B cell (primary cell): ENCODE measurements at regions of chr5 and their contacts with region 1.

Region 1: DNA sequence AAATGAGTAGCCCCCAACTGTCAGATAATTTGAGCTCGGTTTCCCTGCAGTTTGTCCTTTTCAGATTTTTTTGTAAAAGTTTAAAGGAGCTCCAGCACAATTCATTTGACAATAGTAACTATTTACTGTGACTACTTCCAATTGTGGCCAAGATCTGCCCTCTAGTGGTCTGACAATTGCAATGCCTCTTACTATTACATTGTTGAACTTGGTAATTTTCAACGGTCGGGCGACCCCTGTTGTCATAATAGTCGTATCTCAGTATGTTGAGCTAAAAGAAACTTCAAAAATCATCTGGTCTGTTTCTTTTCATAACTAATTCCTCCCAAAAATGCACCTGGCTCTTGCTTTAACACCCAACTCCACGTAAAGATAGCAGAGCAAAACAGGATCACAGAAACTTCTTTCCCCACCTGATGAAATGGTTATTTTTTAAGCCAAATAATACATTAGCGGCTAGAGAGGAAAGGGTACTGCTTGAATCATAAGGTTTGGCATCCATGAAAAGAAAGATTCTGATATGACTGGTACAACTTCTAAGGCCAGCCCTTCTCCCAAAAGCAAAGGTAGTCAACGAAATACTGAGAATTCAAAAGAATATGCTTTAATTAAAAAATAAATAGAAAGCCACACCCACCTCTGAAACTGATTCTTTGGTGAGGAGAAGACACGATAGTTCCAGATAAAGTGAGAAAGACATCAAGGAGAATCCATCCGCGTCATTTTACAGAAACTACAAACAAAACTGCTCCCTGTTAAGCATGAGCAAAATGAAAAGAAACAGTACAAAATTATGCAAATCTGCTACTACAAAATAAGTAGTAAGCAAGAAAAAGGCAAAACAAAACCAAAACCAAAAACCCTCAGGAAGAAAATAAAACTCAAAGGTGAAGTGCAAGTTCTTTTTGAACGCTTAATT is 76.9 kb upstream of the HTR4 start:
- DNase-seq: peak; percentile 80
- ATAC-seq: peak; percentile 92
- H3K4me3 ChIP-seq: peak overlapping the region in 4 of 5 experiments; percentile 0 to 39 (median 24)
- H3K4me3 Mint-ChIP-seq: peak overlapping the region; percentile 76
- H3K27ac ChIP-seq: no peak overlapping the region
- H3K27ac Mint-ChIP-seq: no peak overlapping the region
- H3K4me1 ChIP-seq: no peaks in the 10 kb centered on the region
- H3K4me1 Mint-ChIP-seq: peaks cover 11% of the 10 kb centered on the region
- H3K27me3 ChIP-seq: no peaks in the 10 kb centered on the region
- H3K27me3 Mint-ChIP-seq: peaks cover 10% of the 10 kb centered on the region
- CTCF ChIP-seq: peak; percentile 98

Region 2: GRCh38 chr5:147949711-147950573 is 781.3 kb before region 1 on chr5:
- CTCF ChIA-PET with region 1: no interaction called
- POLR2A ChIA-PET with region 1: no interaction called
- intact Hi-C with region 1: loop called (anchors 5 kb)
- DNase-seq: peak; percentile 8
- ATAC-seq: no peak
- H3K4me3 ChIP-seq: no peak overlapping the region
- H3K4me3 Mint-ChIP-seq: no peak overlapping the region
- H3K27ac ChIP-seq: no peak overlapping the region
- H3K27ac Mint-ChIP-seq: no peak overlapping the region
- H3K4me1 ChIP-seq: no peaks in the 10 kb centered on the region
- H3K4me1 Mint-ChIP-seq: no peaks in the 10 kb centered on the region
- H3K27me3 ChIP-seq: no peaks in the 10 kb centered on the region
- H3K27me3 Mint-ChIP-seq: peaks cover 2% of the 10 kb centered on the region
- CTCF ChIP-seq: peak; percentile 65

Region 3: DNA sequence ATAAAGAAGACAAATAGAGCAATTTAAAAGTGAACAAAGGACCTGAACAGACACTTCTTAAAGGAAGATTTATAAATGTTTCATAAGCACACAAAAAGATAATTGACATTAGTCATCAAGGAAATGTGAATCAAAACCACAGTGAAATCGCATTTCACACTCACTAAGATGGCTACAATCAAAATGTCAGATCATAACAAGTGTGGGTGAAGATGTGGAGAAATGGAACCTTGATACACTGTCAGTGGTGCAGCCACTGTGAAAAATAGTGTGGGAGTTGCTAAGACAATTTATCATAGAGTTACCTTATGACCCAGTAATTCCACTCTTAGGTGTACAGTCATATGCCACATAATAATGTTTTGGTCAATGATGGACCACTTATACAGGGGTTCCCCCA is 22.3 kb before region 1 on chr5:
- CTCF ChIA-PET with region 1: interaction called, 11 read pairs
- POLR2A ChIA-PET with region 1: no interaction called
- intact Hi-C with region 1: no loop called
- DNase-seq: no peak
- ATAC-seq: no peak
- H3K4me3 ChIP-seq: no peak overlapping the region
- H3K4me3 Mint-ChIP-seq: no peak overlapping the region
- H3K27ac ChIP-seq: no peak overlapping the region
- H3K27ac Mint-ChIP-seq: no peak overlapping the region
- H3K4me1 ChIP-seq: no peaks in the 10 kb centered on the region
- H3K4me1 Mint-ChIP-seq: no peaks in the 10 kb centered on the region
- H3K27me3 ChIP-seq: no peaks in the 10 kb centered on the region
- H3K27me3 Mint-ChIP-seq: peaks cover 25% of the 10 kb centered on the region
- CTCF ChIP-seq: no peak

Region 4: DNA sequence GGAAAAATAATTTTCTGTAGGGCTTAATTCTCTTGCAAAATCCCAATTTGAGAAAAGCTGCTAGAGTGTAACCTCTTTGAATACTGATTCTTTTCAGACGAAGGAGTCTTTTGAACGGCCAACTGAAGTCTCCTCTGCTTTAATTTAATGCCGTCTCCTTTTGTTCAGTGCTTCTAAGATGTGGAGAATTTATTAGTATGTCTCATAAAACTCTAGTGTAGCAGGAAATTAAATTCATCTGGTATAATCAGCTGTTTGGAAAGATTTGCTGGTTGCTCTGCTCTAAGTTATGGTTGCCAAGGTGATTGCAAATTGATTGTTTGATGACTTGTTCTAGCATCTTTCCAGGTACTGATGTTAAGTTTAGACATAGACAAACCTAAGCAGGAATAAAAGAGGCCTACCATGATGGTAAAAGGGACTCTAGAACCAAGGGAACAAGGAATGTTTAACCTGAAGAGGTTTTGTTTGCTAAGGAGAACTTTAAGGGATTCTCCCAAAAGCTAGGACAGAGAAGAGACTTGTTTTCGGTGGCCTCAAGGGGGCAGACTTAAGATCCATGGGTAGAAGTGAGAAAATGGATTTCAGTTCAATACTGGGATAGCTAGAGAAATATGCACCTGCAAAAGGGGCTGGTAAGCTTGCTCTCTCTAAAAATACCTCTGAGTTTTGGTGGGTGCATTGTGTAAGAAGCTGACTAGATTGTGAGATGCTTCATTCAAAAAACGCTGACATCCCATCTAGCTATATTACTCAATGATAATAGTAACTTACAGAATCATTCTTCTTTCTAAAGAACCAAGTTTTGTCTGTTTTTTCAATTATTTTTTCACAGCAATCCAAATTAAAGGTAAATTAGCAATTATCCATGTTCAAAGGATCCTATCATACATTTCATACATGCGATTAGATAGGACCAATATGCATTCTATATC is 89.5 kb after region 1 on chr5:
- CTCF ChIA-PET with region 1: interaction called, 21 read pairs
- POLR2A ChIA-PET with region 1: no interaction called
- intact Hi-C with region 1: no loop called
- DNase-seq: peak; percentile 41
- ATAC-seq: no peak
- H3K4me3 ChIP-seq: no peak overlapping the region
- H3K4me3 Mint-ChIP-seq: no peak overlapping the region
- H3K27ac ChIP-seq: no peak overlapping the region
- H3K27ac Mint-ChIP-seq: no peak overlapping the region
- H3K4me1 ChIP-seq: peaks cover 33 to 35% of the 10 kb centered on the region in 2 donors
- H3K4me1 Mint-ChIP-seq: peaks cover 60% of the 10 kb centered on the region
- H3K27me3 ChIP-seq: no peaks in the 10 kb centered on the region
- H3K27me3 Mint-ChIP-seq: no peaks in the 10 kb centered on the region
- CTCF ChIP-seq: peak; percentile 67

Region 5: DNA sequence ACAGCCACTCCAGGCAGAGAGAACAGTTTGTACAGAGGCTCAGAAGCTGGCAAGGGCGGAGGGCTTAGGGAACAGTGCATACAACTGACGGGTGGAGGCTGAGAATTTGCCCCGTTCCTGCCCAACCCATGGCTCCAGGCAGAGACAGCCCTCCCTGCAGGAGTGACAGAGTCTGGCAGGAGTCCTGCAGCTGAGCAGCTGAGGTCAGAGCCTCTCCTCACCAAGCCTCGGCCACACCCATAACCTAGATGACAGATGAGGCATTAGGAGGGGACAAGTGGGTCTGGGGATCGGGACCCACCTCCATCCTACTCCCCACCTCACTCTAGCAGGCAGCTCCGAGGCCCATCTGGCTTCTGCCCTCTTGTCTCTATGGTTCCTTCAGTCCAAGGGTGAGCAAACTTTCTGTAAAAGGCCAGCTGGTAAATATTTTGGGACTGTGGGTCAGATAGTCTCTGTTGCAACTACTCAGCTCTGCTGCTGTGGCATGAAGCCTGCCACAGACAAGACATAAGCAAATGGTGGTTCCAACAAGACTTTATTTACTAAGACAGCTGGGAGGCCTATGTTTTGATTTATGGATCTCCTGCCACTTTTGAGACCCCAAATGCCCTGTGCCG is 248.0 kb after region 1 on chr5:
- CTCF ChIA-PET with region 1: interaction called, 12 read pairs
- POLR2A ChIA-PET with region 1: no interaction called
- intact Hi-C with region 1: no loop called
- DNase-seq: no peak
- ATAC-seq: no peak
- H3K4me3 ChIP-seq: no peak overlapping the region
- H3K4me3 Mint-ChIP-seq: no peak overlapping the region
- H3K27ac ChIP-seq: no peak overlapping the region
- H3K27ac Mint-ChIP-seq: no peak overlapping the region
- H3K4me1 ChIP-seq: no peaks in the 10 kb centered on the region
- H3K4me1 Mint-ChIP-seq: no peaks in the 10 kb centered on the region
- H3K27me3 ChIP-seq: peaks cover 0 to 5% (median 0%) of the 10 kb centered on the region in 4 experiments
- H3K27me3 Mint-ChIP-seq: peaks cover 29% of the 10 kb centered on the region
- CTCF ChIP-seq: no peak

Region 6: GRCh38 chr5:149035372-149035790 is 304.2 kb after region 1 on chr5:
- CTCF ChIA-PET with region 1: interaction called, 373 read pairs
- POLR2A ChIA-PET with region 1: no interaction called
- intact Hi-C with region 1: loop called (anchors 1 kb)
- DNase-seq: peak; percentile 69
- ATAC-seq: peak; percentile 54
- H3K4me3 ChIP-seq: no peak overlapping the region
- H3K4me3 Mint-ChIP-seq: no peak overlapping the region
- H3K27ac ChIP-seq: no peak overlapping the region
- H3K27ac Mint-ChIP-seq: no peak overlapping the region
- H3K4me1 ChIP-seq: no peaks in the 10 kb centered on the region
- H3K4me1 Mint-ChIP-seq: no peaks in the 10 kb centered on the region
- H3K27me3 ChIP-seq: no peaks in the 10 kb centered on the region
- H3K27me3 Mint-ChIP-seq: peaks cover 18% of the 10 kb centered on the region
- CTCF ChIP-seq: peak; percentile 83